WTC11 (cell line): ENCODE measurements at regions of chr16 and their contacts with region 1.

Region 1: GRCh38 chr16:66344533-66345145 is 21.9 kb upstream of the CDH5 start:
- DNase-seq: no peak
- ATAC-seq: no peak
- H3K4me3 Mint-ChIP-seq: no peak overlapping the region
- H3K27ac Mint-ChIP-seq: no peak overlapping the region
- H3K4me1 Mint-ChIP-seq: peaks cover 7% of the 10 kb centered on the region
- H3K27me3 Mint-ChIP-seq: peaks cover 11% of the 10 kb centered on the region
- CTCF ChIP-seq: peak; percentile 73

Region 2: GRCh38 chr16:66255647-66256046 is 89.0 kb before region 1 on chr16:
- CTCF ChIA-PET with region 1: no interaction called
- POLR2A ChIA-PET with region 1: no interaction called
- DNase-seq: peak; percentile 32
- ATAC-seq: peak; percentile 70
- H3K4me3 Mint-ChIP-seq: no peak overlapping the region
- H3K27ac Mint-ChIP-seq: no peak overlapping the region
- H3K4me1 Mint-ChIP-seq: peaks cover 6% of the 10 kb centered on the region
- H3K27me3 Mint-ChIP-seq: no peaks in the 10 kb centered on the region
- CTCF ChIP-seq: no peak

Region 3: DNA sequence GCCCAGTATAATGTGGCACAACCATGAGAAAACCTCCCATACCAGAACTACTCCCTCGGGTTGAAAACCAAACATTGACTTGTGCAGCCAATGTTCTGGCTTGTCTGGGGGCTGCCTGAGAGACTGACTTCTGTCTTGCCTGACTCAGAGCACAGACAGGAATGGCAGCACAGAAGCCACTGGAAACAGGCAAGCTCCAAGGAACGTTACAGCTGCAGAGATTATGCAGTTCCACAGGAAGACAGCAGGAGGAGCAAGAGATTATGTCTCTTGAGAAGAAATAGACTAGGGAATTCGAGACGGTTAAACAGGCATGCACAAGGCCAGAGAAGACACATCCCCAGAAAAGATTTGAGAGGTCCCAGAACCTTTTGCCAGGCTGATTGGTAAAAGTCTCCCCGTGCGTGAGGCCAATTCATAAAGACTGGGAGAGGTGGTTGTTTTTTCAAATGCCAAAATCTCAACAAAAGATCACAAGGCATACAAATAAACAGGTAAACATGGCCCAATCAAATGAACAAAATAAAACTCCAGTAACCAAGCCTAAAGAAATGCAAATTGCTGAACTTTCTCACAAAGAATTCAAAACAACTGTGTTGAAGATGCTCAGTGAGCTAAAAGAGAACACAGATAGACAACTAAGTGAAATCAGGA is 68.7 kb before region 1 on chr16:
- CTCF ChIA-PET with region 1: interaction called, 14 read pairs
- POLR2A ChIA-PET with region 1: no interaction called
- DNase-seq: peak; percentile 69
- ATAC-seq: peak; percentile 65
- H3K4me3 Mint-ChIP-seq: no peak overlapping the region
- H3K27ac Mint-ChIP-seq: no peak overlapping the region
- H3K4me1 Mint-ChIP-seq: peaks cover 43% of the 10 kb centered on the region
- H3K27me3 Mint-ChIP-seq: peaks cover 19% of the 10 kb centered on the region
- CTCF ChIP-seq: peak; percentile 62

Region 4: GRCh38 chr16:66324815-66325515 is 19.7 kb before region 1 on chr16:
- CTCF ChIA-PET with region 1: interaction called, 49 read pairs
- POLR2A ChIA-PET with region 1: no interaction called
- DNase-seq: peak; percentile 74
- ATAC-seq: peak; percentile 93
- H3K4me3 Mint-ChIP-seq: no peak overlapping the region
- H3K27ac Mint-ChIP-seq: no peak overlapping the region
- H3K4me1 Mint-ChIP-seq: peaks cover 19% of the 10 kb centered on the region
- H3K27me3 Mint-ChIP-seq: no peaks in the 10 kb centered on the region; the same call in 1 of the 2 replicates
- CTCF ChIP-seq: no peak

Region 5: DNA sequence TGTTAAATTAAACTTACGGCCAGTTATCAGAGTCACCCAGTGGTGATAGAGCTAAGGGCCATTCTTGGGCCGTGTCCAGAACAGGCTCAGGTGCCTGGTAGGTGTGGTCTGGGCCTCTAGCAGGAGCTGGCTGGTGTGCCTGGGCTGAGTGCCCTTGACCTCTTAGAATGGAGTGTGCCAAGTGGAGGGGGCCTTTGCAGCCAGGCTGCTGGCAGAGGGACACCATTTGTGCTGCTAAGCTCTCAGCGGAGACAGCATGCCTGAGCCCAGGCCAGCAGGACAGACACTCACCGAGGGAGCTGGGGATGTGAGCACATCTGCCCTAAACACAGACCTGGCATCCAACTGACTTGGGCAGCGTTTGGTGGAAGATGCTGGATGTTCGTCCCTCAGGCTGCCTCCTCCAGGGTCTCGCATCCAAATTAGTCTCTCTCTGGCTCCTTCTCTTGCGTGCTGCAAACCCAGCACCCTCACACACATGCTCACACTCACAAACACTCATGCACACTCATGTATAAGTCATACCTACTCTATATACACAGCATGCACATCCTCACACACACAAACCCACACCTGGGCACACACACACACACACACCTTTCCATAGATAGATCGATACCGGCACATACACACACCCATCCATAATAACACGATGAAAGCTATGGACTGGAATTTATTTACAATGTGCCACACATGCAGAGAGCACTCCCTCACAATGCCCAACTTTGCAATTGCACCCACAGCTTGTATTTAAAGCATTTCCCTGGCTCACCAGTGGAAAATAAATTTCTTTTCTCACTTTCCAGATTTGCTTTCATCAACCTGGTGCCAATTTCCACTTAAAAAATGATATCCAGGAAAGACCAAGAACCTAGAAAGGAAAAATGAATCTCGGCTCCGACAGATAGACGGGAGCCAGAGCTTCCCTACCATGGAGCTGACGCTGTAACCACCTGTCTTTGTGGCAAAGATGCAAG is 11.7 kb before region 1 on chr16:
- CTCF ChIA-PET with region 1: interaction called, 49 read pairs
- POLR2A ChIA-PET with region 1: no interaction called
- DNase-seq: no peak
- ATAC-seq: no peak
- H3K4me3 Mint-ChIP-seq: no peak overlapping the region
- H3K27ac Mint-ChIP-seq: no peak overlapping the region
- H3K4me1 Mint-ChIP-seq: 0 out of 2 replicates have a peak, but pooled peaks cover 4% of the 10 kb centered on the region
- H3K27me3 Mint-ChIP-seq: peaks cover 5% of the 10 kb centered on the region
- CTCF ChIP-seq: no peak

Region 6: GRCh38 chr16:66357153-66357928 is 12.7 kb after region 1 on chr16:
- CTCF ChIA-PET with region 1: interaction called, 103 read pairs
- POLR2A ChIA-PET with region 1: no interaction called
- DNase-seq: peak; percentile 47
- ATAC-seq: peak; percentile 74
- H3K4me3 Mint-ChIP-seq: no peak overlapping the region
- H3K27ac Mint-ChIP-seq: no peak overlapping the region
- H3K4me1 Mint-ChIP-seq: peaks cover 11% of the 10 kb centered on the region
- H3K27me3 Mint-ChIP-seq: peaks cover 7% of the 10 kb centered on the region
- CTCF ChIP-seq: peak; percentile 52; the same call in 1 of the 2 replicates

Region 7: DNA sequence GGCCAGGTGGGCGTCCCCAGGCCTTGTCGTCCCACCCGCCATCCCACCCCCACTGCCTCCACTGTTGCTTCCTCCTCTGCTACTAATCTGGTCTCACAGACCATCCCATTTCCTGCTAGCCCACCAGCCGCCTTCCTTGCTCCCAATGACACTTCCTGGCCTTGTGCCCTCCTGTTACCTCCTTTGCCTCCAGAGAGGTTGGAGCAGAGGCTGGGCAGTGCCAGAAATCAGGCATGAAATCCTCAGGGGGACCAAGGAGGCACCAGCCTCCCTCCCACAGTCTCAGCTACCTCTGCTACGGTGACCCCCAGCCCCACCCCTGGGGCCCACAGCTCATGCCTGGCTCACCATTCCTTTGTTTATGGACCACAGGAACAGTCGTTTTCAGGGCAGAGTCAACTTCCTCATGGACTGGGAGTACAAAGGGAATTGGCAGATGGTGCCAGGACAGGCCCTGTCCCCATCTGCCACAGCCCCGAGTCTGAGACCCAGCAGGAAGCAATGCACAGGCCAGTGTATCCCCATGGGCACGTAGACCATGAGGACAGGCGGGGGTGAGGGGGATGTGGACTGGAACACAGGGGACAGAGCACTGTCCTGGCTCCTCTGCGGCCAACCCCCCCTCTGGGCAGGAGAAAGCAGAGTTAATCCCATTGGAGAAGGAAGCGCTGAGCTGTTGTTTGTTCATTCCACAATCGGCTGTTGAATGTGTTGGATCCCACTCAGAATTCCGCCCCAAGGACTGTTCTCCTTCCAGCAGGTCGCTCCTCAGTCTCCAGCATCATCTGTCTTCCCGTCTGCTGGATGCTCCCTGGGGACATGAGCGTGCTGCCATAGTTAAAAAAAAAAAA is 19.7 kb after region 1 on chr16:
- CTCF ChIA-PET with region 1: interaction called, 103 read pairs
- POLR2A ChIA-PET with region 1: no interaction called
- DNase-seq: no peak
- ATAC-seq: no peak
- H3K4me3 Mint-ChIP-seq: no peak overlapping the region
- H3K27ac Mint-ChIP-seq: 0 out of 2 replicates have a peak overlapping the region, but pooled peaks have one; percentile 5
- H3K4me1 Mint-ChIP-seq: peaks cover 50% of the 10 kb centered on the region
- H3K27me3 Mint-ChIP-seq: no peaks in the 10 kb centered on the region; the same call in none of the 2 replicates
- CTCF ChIP-seq: no peak